ENCODE measurements at regions of chr7 and their contacts with region 1.

Region 1: DNA sequence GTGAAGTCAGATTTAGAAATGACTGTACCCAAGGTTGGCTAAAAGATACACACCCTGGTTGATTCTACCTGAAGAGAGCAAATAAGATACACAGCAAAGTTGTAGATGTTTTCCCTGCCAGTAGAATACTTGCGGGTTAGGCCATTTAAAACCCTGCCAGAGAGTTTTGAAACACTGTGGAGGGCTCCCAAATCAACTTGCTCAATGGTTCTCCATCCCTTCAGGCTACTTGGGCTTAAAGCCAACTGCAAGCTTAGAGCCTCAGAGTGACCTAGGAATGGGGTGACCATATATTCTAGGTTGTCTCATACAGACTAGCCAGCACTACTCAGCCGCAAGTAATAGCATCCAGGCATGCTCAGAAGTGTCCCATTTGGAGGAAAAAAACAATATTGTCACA is 10.0 kb downstream of the CAV1 start:
- DNase-seq: no peak
- ATAC-seq: no peak
- H3K4me3 ChIP-seq: no peak overlapping the region
- H3K4me3 Mint-ChIP-seq: no peak overlapping the region
- H3K27ac ChIP-seq: no peak overlapping the region
- H3K27ac Mint-ChIP-seq: no peak overlapping the region
- H3K4me1 ChIP-seq: no peaks in the 10 kb centered on the region
- H3K4me1 Mint-ChIP-seq: no peaks in the 10 kb centered on the region
- H3K27me3 ChIP-seq: peaks cover 0 to 5% of the 10 kb centered on the region in 2 experiments
- H3K27me3 Mint-ChIP-seq: peaks cover 23 to 26% of the 10 kb centered on the region in 2 donors

Region 2: DNA sequence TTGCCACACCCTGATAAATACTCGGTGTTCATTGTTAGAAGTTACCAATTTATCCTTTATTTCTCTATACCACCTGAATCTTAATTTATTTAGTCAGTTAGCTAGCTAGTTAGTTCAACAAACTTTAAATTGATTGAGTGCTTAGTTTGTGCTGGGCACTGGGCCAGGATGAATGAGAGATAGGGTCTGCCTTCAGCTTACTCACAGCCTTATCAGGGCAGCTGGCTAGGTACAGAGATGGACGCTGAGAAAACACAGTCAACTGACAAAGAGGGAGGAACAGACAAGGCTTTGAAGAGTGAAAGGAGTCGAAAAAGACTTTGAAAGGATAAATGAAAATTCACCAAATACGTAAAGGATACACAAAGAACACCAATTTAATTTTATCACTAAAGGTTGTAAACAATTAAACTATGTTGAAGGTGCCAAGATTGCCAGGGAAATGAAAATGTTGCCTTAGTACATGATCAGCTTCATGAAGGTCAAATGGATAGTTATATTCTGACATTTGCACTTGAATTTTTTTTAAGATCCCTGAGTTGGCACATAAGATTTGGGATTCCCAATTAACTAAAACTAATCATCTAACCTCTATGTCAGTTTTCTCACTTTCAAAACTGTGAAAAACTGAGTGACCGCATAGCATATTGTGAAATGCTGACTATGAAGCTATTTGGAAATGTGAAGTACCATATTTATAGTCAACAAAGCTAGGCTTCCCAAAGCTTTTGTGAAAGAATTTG is 33.2 kb before region 1 on chr7:
- CTCF ChIA-PET with region 1: interaction called in 1 of 2 experiments, 14 read pairs
- POLR2A ChIA-PET with region 1: no interaction called
- DNase-seq: no peak
- ATAC-seq: no peak
- H3K4me3 ChIP-seq: no peak overlapping the region
- H3K4me3 Mint-ChIP-seq: no peak overlapping the region
- H3K27ac ChIP-seq: no peak overlapping the region
- H3K27ac Mint-ChIP-seq: no peak overlapping the region
- H3K4me1 ChIP-seq: peaks cover 7 to 17% of the 10 kb centered on the region in 2 experiments
- H3K4me1 Mint-ChIP-seq: peaks cover 9 to 11% (median 10%) of the 10 kb centered on the region in 3 donors
- H3K27me3 ChIP-seq: peaks cover 11 to 26% of the 10 kb centered on the region in 2 experiments
- H3K27me3 Mint-ChIP-seq: peaks cover 46 to 63% of the 10 kb centered on the region in 2 donors